ENCODE measurements at regions of chr18 and their contacts with region 1.

Region 1: GRCh38 chr18:27005589-27005988 is 140.1 kb upstream of the AQP4 start:
- DNase-seq: no peak
- H3K4me3 ChIP-seq: no peak overlapping the region
- H3K27ac ChIP-seq: no peak overlapping the region
- H3K4me1 ChIP-seq: no peaks in the 10 kb centered on the region
- H3K27me3 ChIP-seq: no peaks in the 10 kb centered on the region
- CTCF ChIP-seq: peak; percentile 49

Region 2: DNA sequence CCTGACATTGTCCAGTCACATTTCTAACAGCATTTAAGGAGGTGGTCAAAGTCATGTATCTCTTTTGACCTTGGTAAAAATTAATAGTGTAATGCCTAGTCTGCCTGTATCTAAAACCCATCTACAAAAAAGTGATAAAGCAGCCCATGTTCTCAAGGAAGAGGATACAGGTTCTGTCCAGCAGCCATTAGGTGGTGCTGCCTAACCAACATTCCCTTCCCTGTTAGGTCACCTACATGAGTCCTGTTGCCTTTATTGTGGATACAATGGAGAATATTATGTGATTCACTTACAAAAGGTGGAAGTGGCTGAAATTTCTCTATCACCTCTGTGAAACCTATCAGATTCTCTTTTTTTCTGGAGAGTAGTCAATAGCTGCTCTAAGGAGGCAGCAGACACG is 192.5 kb before region 1 on chr18:
- intact Hi-C with region 1: loop called (anchors 10 kb)
- DNase-seq: no peak
- H3K4me3 ChIP-seq: no peak overlapping the region
- H3K27ac ChIP-seq: no peak overlapping the region
- H3K4me1 ChIP-seq: no peaks in the 10 kb centered on the region
- H3K27me3 ChIP-seq: peaks cover 14% of the 10 kb centered on the region
- CTCF ChIP-seq: peak; percentile 64

Region 3: GRCh38 chr18:27057519-27058234 is 52.1 kb after region 1 on chr18:
- intact Hi-C with region 1: no loop called
- DNase-seq: peak; percentile 19
- H3K4me3 ChIP-seq: peak overlapping the region; percentile 51
- H3K27ac ChIP-seq: peak overlapping the region; percentile 95
- H3K4me1 ChIP-seq: peaks cover 30% of the 10 kb centered on the region
- H3K27me3 ChIP-seq: no peaks in the 10 kb centered on the region
- CTCF ChIP-seq: no peak

Region 4: GRCh38 chr18:27240383-27240782 is 234.8 kb after region 1 on chr18:
- intact Hi-C with region 1: no loop called
- DNase-seq: no peak
- H3K4me3 ChIP-seq: no peak overlapping the region
- H3K27ac ChIP-seq: no peak overlapping the region
- H3K4me1 ChIP-seq: no peaks in the 10 kb centered on the region
- H3K27me3 ChIP-seq: no peaks in the 10 kb centered on the region
- CTCF ChIP-seq: no peak

Measured in left ventricle myocardium inferior (tissue), 1 donor.